ENCODE measurements at regions of chr9 and their contacts with region 1.

Region 1: GRCh38 chr9:123349691-123350480 is 6.1 kb upstream of the CRB2 start:
- DNase-seq: peak; percentile 25 to 79 (median 53)
- ATAC-seq: peak; percentile 72 to 85 (median 76)
- H3K4me3 ChIP-seq: no peak overlapping the region
- H3K4me3 Mint-ChIP-seq: no peak overlapping the region
- H3K27ac ChIP-seq: no peak overlapping the region
- H3K27ac Mint-ChIP-seq: no peak overlapping the region
- H3K4me1 ChIP-seq: peaks cover 0 to 12% of the 10 kb centered on the region in 2 experiments
- H3K4me1 Mint-ChIP-seq: peaks cover 0 to 4% (median 3%) of the 10 kb centered on the region in 3 donors
- H3K27me3 ChIP-seq: peaks cover 0 to 39% of the 10 kb centered on the region in 2 experiments
- H3K27me3 Mint-ChIP-seq: peaks cover 4 to 6% of the 10 kb centered on the region in 2 donors

Region 2: GRCh38 chr9:123081824-123082223 is 268.1 kb before region 1 on chr9:
- CTCF ChIA-PET with region 1: interaction called, 6 to 22 read pairs
- POLR2A ChIA-PET with region 1: no interaction called
- DNase-seq: peak in 10 of 35 experiments; percentile 1 to 55 (median 8)
- ATAC-seq: no peak
- H3K4me3 ChIP-seq: no peak overlapping the region
- H3K4me3 Mint-ChIP-seq: no peak overlapping the region
- H3K27ac ChIP-seq: no peak overlapping the region
- H3K27ac Mint-ChIP-seq: no peak overlapping the region
- H3K4me1 ChIP-seq: no peaks in the 10 kb centered on the region
- H3K4me1 Mint-ChIP-seq: no peaks in the 10 kb centered on the region
- H3K27me3 ChIP-seq: no peaks in the 10 kb centered on the region
- H3K27me3 Mint-ChIP-seq: no peaks in the 10 kb centered on the region

Region 3: GRCh38 chr9:123338710-123339665 is 10.9 kb before region 1 on chr9:
- CTCF ChIA-PET with region 1: interaction called in 1 of 2 experiments, 14 read pairs
- POLR2A ChIA-PET with region 1: no interaction called
- DNase-seq: peak in 28 of 35 experiments; percentile 12 to 56 (median 30)
- ATAC-seq: peak; percentile 68 to 69 (median 69)
- H3K4me3 ChIP-seq: peak overlapping the region; percentile 54 to 75
- H3K4me3 Mint-ChIP-seq: peak overlapping the region; percentile 73 to 85 (median 84)
- H3K27ac ChIP-seq: peak overlapping the region; percentile 62
- H3K27ac Mint-ChIP-seq: peak overlapping the region; percentile 82 to 93
- H3K4me1 ChIP-seq: peaks cover 10 to 29% of the 10 kb centered on the region in 2 experiments
- H3K4me1 Mint-ChIP-seq: peaks cover 32 to 55% (median 38%) of the 10 kb centered on the region in 3 donors
- H3K27me3 ChIP-seq: peaks cover 0 to 4% of the 10 kb centered on the region in 2 experiments
- H3K27me3 Mint-ChIP-seq: no peaks in the 10 kb centered on the region

Measured in T-cell (primary cell).